Activated T-helper 2 cell treated with anti-CD3 and anti-CD28 coated beads, Interferon-gamma antibody, Interleukin-2, Interleukin-4, amounts not matched to agents 10 μg/mL and 5 μg/mL and 100 μg/mL, durations not matched to agents 14 hours and 24 hours and 36 hours (primary cell): ENCODE measurements at regions of chr15 and their contacts with region 1.

Region 1: DNA sequence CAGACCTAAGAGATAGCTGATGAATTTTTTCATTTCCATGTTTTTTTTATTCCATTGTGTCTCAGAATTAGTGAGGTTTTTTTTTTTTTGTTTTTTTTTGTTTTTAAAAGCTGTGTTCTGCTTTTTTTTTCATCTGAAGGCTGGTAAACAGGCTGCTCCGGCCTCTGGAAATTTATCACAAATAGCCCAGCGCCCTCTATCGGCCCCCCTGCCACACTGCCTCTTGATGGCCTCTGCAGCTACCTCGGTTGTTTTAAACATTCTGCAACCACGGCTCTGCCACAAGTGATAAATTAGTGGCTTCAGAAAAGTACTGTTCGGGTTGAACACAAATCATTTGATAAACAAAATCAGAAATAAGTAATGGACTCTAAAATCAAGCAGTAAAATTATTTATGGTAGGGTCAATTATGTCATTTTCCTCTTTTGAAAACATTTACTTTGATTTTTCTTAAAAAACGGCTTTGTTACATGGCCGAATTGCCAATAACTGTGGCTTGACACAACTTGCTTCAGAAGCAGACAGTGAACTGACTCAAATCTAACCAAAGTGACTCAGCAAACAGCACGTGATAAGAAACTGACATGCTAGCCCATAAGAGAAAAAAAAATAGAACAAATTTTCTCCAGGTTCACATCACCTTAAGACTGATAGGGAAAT is 87.8 kb downstream of the RSL24D1 start:
- DNase-seq: peak; percentile 40
- H3K4me3 Mint-ChIP-seq: no peak overlapping the region
- H3K27ac Mint-ChIP-seq: no peak overlapping the region
- H3K4me1 Mint-ChIP-seq: no peaks in the 10 kb centered on the region
- H3K27me3 Mint-ChIP-seq: peaks cover 2% of the 10 kb centered on the region

Region 2: DNA sequence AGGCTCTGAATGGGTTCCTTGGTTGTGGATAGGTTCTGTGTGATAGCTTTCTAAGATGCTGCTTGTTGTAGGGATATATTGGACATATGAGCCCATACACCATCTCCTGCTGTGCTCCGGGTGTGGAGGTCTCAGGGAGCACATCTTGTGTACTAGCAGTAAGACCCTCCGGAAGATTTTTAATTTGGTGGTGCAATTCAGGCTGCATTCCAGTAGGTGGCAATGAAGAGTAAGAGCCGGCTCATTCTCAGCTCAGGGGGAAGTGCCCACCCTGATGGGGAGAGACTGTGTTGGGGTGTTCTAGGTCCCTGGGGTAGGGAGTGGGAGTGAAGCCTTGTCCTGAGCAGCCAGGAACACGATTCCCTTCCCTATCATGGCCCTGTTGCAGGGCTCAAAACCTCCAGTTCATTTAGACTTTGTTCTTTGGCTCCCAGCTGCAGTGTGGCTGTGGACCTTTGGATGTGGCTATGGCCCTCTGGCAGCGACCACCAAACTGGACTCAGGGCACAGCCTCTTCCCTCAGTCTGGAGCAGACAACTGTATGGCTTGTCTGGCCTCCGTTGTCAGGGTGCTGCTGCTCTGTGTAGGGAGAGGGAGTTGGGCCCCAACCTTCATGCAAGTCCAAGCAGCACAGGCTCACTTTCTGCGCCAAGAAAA is 1026.0 kb before region 1 on chr15:
- intact Hi-C with region 1: loop called (anchors 5 kb)
- DNase-seq: no peak
- H3K4me3 Mint-ChIP-seq: no peak overlapping the region
- H3K27ac Mint-ChIP-seq: no peak overlapping the region
- H3K4me1 Mint-ChIP-seq: no peaks in the 10 kb centered on the region
- H3K27me3 Mint-ChIP-seq: no peaks in the 10 kb centered on the region

Region 3: GRCh38 chr15:55277116-55277564 is 168.2 kb after region 1 on chr15:
- intact Hi-C with region 1: no loop called
- DNase-seq: peak; percentile 66
- H3K4me3 Mint-ChIP-seq: peak overlapping the region; percentile 59
- H3K27ac Mint-ChIP-seq: peak overlapping the region; percentile 93
- H3K4me1 Mint-ChIP-seq: peaks cover 75% of the 10 kb centered on the region
- H3K27me3 Mint-ChIP-seq: no peaks in the 10 kb centered on the region